Posterior cingulate gyrus (tissue), 11 donors: ENCODE measurements at regions of chr7 and their contacts with region 1.

Region 1: GRCh38 chr7:71752171-71752935 is 620.4 kb downstream of the GALNT17 start:
- DNase-seq: peak; percentile 56 to 96 (median 75)

Region 2: GRCh38 chr7:71661671-71662224 is 90.6 kb before region 1 on chr7:
- intact Hi-C with region 1: no loop called
- DNase-seq: no peak

Region 3: GRCh38 chr7:71766016-71766415 is 13.7 kb after region 1 on chr7:
- intact Hi-C with region 1: no loop called
- DNase-seq: no peak

Region 4: DNA sequence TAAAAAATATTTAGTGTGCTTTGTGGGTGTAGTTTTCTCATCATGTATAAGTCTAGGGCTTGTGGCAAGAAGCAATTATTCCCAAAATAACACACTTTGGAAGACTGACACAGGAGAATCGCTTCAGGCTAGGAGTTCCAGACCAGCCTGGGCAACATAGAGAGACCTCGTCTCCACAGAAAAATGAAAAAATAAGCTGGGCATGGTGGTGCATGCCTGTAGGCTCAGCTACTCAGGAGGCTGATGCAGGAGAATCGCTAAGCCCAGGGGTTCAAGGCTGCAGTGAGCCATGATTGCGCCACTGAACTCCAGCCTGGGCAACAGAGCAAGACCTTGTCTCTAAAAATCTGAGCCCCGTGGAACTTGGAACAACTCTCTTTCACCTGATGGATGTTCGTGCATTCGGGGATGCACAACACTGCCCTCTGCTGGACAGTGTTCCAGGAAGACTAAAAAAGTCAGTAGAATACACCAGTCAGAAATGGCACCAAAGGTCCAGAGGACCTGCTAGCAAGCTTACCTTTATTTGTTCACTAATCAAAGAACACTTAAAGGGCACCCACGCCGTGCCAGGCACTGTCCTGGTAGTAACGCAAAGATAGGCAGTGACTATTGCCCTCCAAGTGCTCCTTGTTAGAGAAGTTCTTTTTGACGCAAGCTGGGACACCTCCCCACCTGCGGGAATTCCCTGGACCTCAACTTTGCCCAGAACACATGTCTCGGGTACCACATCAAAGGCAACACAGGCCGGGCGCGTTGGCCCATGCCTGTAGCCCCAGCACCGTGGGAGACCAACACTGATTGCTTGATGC is 741.7 kb after region 1 on chr7:
- intact Hi-C with region 1: loop called (anchors 2 kb)
- DNase-seq: peak in 9 of 10 donors; percentile 37 to 93 (median 79)

Region 5: GRCh38 chr7:72785166-72785955 is 1033.0 kb after region 1 on chr7:
- intact Hi-C with region 1: loop called (anchors 10 kb)
- DNase-seq: no peak